Transverse colon (tissue), 4 donors: ENCODE measurements at regions of chr4 and their contacts with region 1.

Region 1: GRCh38 chr4:129377131-129377845 is 281.3 kb downstream of the C4orf33 start:
- DNase-seq: no peak
- H3K4me3 ChIP-seq: no peak overlapping the region
- H3K27ac ChIP-seq: no peak overlapping the region
- H3K4me1 ChIP-seq: no peaks in the 10 kb centered on the region
- H3K27me3 ChIP-seq: no peaks in the 10 kb centered on the region
- CTCF ChIP-seq: no peak
- EP300 ChIP-seq: no peak
- POLR2A ChIP-seq: no peak

Region 2: GRCh38 chr4:129415004-129415403 is 37.7 kb after region 1 on chr4:
- in situ Hi-C with region 1: no loop called
- intact Hi-C with region 1: loop called (anchors 1 kb)
- DNase-seq: no peak
- H3K4me3 ChIP-seq: no peak overlapping the region
- H3K27ac ChIP-seq: no peak overlapping the region
- H3K4me1 ChIP-seq: no peaks in the 10 kb centered on the region
- H3K27me3 ChIP-seq: no peaks in the 10 kb centered on the region
- CTCF ChIP-seq: no peak
- EP300 ChIP-seq: no peak
- POLR2A ChIP-seq: no peak